ENCODE measurements at regions of chr3 and their contacts with region 1.

Region 1: DNA sequence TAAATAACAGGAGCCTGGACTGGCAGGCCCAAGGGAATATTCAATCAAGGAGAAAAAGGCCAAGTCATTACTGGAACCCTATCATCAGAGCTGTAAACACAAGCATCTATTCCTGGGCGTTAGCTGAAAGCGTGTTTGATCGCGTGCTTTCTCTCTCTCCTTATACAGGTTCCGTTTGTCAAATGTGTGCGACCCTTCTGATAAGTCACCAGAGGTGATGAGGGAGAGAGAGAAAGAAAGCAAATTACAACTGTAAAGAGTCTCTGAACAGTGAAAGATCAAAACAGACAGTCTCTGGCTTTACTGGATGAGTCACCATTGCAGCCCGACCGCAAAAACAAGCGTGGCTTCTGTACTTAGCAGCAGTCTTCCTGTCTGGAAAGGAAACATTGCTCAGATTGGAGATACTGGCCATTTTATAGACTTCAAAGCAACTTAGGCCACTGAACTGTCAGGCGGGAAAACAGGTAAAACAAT is 39.5 kb upstream of the TPRG1 start:
- DNase-seq: peak in 2 of 4 donors; percentile 60 to 74
- ATAC-seq: peak; percentile 82
- H3K4me3 ChIP-seq: no peak overlapping the region
- H3K27ac ChIP-seq: peak overlapping the region; percentile 40 to 77
- H3K4me1 ChIP-seq: peaks cover 0 to 18% of the 10 kb centered on the region in 2 donors
- H3K27me3 ChIP-seq: no peaks in the 10 kb centered on the region
- CTCF ChIP-seq: no peak

Region 2: GRCh38 chr3:188842639-188843038 is 289.6 kb before region 1 on chr3:
- intact Hi-C with region 1: no loop called
- DNase-seq: no peak
- ATAC-seq: no peak
- H3K4me3 ChIP-seq: no peak overlapping the region
- H3K27ac ChIP-seq: peak overlapping the region in 1 of 2 donors; percentile 60
- H3K4me1 ChIP-seq: peaks cover 0 to 28% of the 10 kb centered on the region in 2 donors
- H3K27me3 ChIP-seq: no peaks in the 10 kb centered on the region
- CTCF ChIP-seq: no peak

Region 3: DNA sequence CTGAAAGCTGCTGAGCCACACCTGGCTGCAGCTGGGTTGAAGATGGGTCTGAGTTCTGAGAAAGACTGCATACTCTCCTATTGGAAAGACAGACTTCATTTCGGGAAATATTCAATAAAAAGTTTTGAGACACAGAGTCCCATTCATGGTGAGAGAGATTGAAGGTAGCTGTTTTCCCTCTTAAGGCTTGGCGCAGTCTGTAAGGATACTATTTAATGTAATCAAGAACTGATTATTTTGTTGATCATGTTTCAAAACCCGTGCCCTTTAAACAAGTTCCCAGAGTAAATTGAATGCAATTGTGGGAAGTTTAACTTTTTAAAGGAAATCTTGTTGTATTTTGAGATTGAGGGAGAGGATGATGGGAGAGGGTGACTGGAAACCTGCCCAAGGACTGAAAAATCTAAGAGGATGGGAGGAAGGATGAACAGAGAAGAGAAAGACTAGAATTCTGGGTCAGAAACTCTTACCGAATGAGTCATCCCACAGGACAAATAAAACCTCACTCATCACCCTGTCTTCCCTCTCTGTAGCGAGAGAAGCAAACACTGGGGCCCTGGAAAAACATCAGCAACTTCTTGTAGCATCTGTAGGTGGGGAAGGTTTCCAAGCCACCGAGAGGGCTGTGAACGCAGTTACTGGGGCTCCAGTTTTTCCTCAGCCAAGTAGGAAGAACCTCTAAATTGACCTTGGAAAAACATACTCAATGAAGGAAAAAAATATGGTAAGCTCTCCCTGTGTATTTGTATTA is 153.7 kb before region 1 on chr3:
- intact Hi-C with region 1: loop called in 1 of 2 experiments (anchors 10 kb)
- DNase-seq: peak in 3 of 4 donors; percentile 53 to 68 (median 56)
- ATAC-seq: peak; percentile 59
- H3K4me3 ChIP-seq: no peak overlapping the region
- H3K27ac ChIP-seq: peak overlapping the region in 1 of 2 donors; percentile 33
- H3K4me1 ChIP-seq: peaks cover 2 to 10% of the 10 kb centered on the region in 2 donors
- H3K27me3 ChIP-seq: no peaks in the 10 kb centered on the region
- CTCF ChIP-seq: no peak